Right ventricle myocardium inferior (tissue), 1 donor: ENCODE measurements at regions of chr7 and their contacts with region 1.

Region 1: GRCh38 chr7:1664711-1665548 is 5.1 kb upstream of the ELFN1 start:
- DNase-seq: peak; percentile 76
- ATAC-seq: peak; percentile 21

Region 2: DNA sequence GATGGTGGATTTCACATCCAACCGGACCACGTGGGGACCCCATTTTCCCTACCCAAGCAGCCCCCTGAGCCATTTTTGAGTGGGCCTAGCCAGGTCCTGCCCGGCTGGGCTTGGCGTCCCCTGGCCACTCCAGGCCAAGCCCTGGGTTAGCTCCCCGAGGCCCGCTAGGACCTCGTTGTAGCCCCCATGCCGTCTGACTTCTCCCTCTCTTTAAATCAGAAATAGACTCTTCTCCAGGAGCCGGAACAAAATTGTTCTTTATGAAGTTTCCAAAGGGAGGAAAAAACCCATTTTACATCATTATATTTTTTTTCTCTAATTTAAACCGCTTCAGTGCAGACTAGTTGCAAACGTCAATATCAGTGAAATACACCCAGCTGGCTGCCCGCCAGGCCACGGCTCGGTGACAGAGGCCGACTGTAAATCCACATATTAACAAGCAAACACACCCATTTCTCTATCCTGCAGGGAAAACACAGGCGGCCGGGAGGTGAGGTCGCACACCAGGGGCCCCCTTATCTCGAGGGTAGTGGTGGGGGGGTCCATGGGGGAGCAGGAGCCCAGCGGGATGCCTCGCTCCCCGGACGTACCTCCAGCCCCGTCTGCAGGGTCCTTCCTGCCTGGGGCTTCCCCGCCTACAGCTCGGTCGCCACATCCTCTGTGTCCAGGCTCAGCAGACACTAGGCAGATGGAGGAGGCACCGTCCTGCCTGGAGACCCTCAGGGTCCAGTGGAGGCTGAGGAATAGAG is 77.8 kb after region 1 on chr7:
- intact Hi-C with region 1: loop called (anchors 5 kb)
- DNase-seq: peak; percentile 84
- ATAC-seq: peak; percentile 2

Region 3: GRCh38 chr7:1758028-1758858 is 93.3 kb after region 1 on chr7:
- intact Hi-C with region 1: loop called (anchors 2 kb)
- DNase-seq: peak; percentile 72
- ATAC-seq: peak; percentile 66

Region 4: DNA sequence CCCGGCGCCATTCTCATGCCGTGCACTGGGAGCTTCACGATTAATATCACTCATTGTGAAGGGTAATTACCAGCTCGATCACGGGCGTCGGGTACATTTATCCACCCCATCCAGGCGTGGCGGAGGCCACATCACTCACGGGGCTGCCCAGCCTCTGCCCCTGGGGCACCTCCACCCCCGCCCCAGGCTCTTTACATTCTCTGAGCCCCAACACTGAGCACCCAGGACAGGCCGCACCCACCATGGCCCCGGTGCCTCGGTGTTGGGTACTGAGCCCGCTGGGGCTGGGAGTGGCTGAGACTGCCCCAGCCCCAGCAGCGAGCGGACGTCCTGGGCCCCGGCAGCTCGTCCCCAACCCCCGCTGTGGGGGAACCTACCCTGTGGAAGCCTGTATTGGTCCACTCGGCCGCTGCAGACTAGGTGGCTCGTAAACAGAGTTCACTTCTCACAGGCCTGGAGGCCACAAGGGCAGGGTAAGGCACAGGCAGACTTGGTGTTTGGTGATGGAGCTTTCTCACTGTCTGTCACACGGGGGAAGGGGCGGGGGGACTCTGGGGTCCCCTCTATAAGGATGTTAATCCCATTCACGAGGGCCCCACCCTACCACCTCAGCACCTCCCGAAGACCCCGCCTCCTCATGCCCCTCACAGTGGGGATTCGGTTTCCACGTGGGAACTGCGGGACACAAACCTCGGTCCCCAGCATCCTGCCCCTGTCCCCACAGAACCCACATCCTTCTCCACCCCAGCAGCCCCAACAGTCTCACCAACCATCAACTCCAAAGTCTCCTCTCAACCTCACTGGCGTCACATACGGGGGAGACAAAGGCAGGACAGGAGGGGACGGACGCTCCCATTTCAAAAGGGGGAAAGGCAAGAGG is 189.3 kb after region 1 on chr7:
- intact Hi-C with region 1: no loop called
- DNase-seq: peak; percentile 58
- ATAC-seq: no peak